Activated CD8-positive, alpha-beta memory T cell treated with anti-CD3 and anti-CD28 coated beads, Interleukin-2, amount 10 ng/mL, durations not matched to agents 7 days and 5 days (primary cell): ENCODE measurements at regions of chr10 and their contacts with region 1.

Region 1: DNA sequence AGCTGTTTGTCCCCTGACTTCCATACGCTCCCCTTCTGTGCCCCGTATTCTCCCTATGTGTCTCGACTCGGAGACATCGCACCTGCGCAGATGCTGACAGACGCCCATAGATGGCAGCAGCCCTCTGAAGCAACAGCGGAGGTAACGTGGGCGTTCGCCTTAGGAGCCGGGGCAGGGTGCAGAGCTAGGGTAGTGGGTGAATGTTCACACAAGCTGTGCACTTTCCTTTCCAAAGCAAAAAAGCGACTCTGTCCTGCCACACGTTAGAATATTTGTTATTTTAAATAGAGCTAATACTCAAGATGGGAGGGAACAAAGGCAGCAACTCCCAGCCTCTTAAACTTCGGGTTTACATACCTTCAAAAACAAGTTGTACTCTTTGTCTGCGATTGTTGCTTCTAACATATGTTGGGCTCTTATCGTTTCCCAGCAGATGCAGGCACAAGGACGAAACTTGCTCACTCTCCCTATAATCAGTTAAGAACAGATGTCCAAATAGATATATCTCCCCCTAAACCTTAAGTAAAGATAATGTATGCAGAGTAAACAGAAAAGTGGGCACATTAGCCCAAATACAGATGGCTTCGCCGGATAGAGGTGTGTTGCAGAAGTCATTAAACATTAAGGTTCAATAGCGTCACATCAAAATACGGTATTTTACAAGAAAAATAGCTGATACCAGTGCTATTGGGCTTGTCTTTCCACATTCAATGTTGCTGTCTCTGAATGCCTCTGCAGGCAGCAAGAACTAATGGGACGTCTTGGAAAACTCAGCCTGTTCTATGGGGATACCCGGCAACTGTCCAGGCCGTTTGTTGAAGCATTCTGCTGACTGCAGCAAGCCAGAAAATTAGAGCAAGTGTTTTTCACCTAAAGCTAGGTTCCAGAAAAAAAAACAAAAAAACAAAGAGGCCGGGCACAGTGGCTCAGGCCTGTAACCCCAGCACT is 340.3 kb upstream of the PRKCQ start:
- DNase-seq: peak; percentile 91
- ATAC-seq: peak; percentile 99
- H3K4me3 Mint-ChIP-seq: no peak overlapping the region
- H3K27ac Mint-ChIP-seq: peak overlapping the region; percentile 13
- H3K4me1 Mint-ChIP-seq: peaks cover 42% of the 10 kb centered on the region
- H3K27me3 Mint-ChIP-seq: no peaks in the 10 kb centered on the region

Region 2: GRCh38 chr10:7000061-7000460 is 79.7 kb after region 1 on chr10:
- CTCF ChIA-PET with region 1: interaction called, 13 read pairs
- DNase-seq: peak; percentile 57
- ATAC-seq: peak; percentile 75
- H3K4me3 Mint-ChIP-seq: peak overlapping the region; percentile 14
- H3K27ac Mint-ChIP-seq: peak overlapping the region; percentile 74
- H3K4me1 Mint-ChIP-seq: peaks cover 30% of the 10 kb centered on the region
- H3K27me3 Mint-ChIP-seq: peaks cover 11% of the 10 kb centered on the region

Region 3: GRCh38 chr10:7102557-7103349 is 182.4 kb after region 1 on chr10:
- CTCF ChIA-PET with region 1: interaction called, 12 read pairs
- DNase-seq: no peak
- ATAC-seq: no peak
- H3K4me3 Mint-ChIP-seq: no peak overlapping the region
- H3K27ac Mint-ChIP-seq: no peak overlapping the region
- H3K4me1 Mint-ChIP-seq: peaks cover 3% of the 10 kb centered on the region
- H3K27me3 Mint-ChIP-seq: peaks cover 2% of the 10 kb centered on the region

Region 4: GRCh38 chr10:7410862-7411670 is 490.7 kb after region 1 on chr10 and contains the start of gene SFMBT2:
- CTCF ChIA-PET with region 1: interaction called, 82 read pairs
- DNase-seq: peak; percentile 75
- ATAC-seq: peak; percentile 71
- H3K4me3 Mint-ChIP-seq: peak within 1 kb of the TSS; percentile 94
- H3K27ac Mint-ChIP-seq: peak within 1 kb of the TSS; percentile 90
- H3K4me1 Mint-ChIP-seq: peaks cover 52% of the 10 kb centered on the region
- H3K27me3 Mint-ChIP-seq: peaks cover 33% of the 10 kb centered on the region
- total RNA-seq, gene SFMBT2: 49.5 to 69.0 TPM